CD8-positive, alpha-beta T cell (primary cell): ENCODE measurements at regions of chr5 and their contacts with region 1.

Region 1: DNA sequence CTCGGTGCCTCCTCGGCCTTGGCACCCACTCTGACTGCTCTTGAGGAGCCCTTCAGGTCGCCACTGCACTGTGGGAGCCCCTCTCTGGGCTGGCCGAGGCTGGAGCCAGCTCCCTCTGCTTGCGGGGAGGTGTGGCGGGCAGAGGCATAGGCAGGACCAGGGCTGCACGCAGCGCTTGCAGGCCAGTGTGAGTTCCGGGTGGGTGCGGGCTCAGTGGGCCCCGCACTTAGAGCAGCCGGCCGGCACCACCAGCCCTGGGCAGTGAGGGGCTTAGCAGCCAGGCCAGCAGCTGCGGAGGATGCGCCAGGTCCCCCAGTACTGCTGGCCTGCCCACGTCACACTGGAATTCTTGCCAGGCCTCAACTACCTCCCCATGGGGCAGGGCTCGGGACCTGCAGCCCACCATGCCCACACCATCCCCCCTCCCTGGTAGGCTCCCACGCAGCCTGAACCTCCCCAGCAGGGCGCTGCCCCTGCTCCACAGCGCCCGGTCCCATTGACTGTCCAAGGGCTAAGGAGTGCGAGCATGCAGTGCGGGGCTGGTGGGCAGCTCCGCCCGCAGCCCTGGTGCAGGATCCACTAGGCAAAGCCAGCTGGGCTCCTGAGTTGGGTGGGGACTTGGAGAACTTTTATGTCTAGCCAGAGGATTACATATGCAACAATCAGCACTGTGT is 602.9 kb upstream of the ST8SIA4 start:
- DNase-seq: no peak
- ATAC-seq: no peak
- H3K4me3 ChIP-seq: no peak overlapping the region
- H3K4me3 Mint-ChIP-seq: no peak overlapping the region
- H3K27ac ChIP-seq: no peak overlapping the region
- H3K27ac Mint-ChIP-seq: no peak overlapping the region
- H3K4me1 ChIP-seq: no peaks in the 10 kb centered on the region
- H3K4me1 Mint-ChIP-seq: no peaks in the 10 kb centered on the region
- H3K27me3 ChIP-seq: no peaks in the 10 kb centered on the region
- H3K27me3 Mint-ChIP-seq: no peaks in the 10 kb centered on the region
- CTCF ChIP-seq: no peak

Region 2: GRCh38 chr5:101473483-101473882 is 32.5 kb before region 1 on chr5:
- CTCF ChIA-PET with region 1: no interaction called
- POLR2A ChIA-PET with region 1: no interaction called
- intact Hi-C with region 1: loop called in 1 of 2 experiments (anchors 1 kb)
- DNase-seq: no peak
- ATAC-seq: no peak
- H3K4me3 ChIP-seq: no peak overlapping the region
- H3K4me3 Mint-ChIP-seq: no peak overlapping the region
- H3K27ac ChIP-seq: no peak overlapping the region
- H3K27ac Mint-ChIP-seq: no peak overlapping the region
- H3K4me1 ChIP-seq: no peaks in the 10 kb centered on the region
- H3K4me1 Mint-ChIP-seq: no peaks in the 10 kb centered on the region
- H3K27me3 ChIP-seq: no peaks in the 10 kb centered on the region
- H3K27me3 Mint-ChIP-seq: no peaks in the 10 kb centered on the region
- CTCF ChIP-seq: no peak